Colonic mucosa (tissue), 4 donors: ENCODE measurements at regions of chr3 and their contacts with region 1.

Region 1: DNA sequence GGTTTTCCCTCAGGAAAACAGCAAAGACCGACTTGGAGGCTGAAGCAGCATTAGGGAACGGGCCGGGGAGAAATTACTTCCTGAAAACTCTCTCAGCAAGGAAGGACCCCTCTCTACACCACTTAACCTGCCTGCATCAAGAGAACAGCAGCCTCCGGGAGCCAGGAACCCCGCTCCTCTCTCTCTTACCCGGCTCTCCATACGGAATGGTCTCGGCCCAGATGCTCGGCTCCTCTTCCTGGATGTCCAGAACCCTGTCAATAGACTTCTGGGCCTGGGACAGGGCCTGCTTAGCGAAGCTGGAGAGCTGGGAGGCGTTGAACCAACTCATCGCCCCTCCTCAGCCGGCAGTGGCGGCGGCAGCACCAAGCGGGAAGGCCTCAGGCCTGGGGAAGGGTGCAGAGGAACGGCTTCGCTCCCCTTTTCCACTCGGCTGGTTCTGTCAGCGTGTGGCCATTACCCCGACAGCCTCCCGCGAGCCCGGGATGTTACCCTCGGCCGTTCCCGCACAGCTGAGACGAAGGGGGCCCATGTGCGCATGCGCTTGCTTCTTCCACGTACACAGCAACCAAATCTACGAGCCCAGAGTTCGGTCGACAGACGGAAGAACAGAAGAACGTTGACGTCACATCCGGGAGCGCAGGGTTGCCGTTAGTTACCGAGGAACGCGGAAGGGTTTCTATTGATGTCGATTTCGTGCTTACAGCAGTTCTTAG is at the start of gene TMF1:
- DNase-seq: peak; percentile 98
- H3K4me3 ChIP-seq: peak within 1 kb of the TSS; percentile 88
- H3K27ac ChIP-seq: peak within 1 kb of the TSS; percentile 98
- H3K4me1 ChIP-seq: peaks cover 10% of the 10 kb centered on the region
- H3K27me3 ChIP-seq: no peaks in the 10 kb centered on the region
- CTCF ChIP-seq: no peak
- total RNA-seq, gene TMF1: 39.0 to 60.2 TPM

Region 2: DNA sequence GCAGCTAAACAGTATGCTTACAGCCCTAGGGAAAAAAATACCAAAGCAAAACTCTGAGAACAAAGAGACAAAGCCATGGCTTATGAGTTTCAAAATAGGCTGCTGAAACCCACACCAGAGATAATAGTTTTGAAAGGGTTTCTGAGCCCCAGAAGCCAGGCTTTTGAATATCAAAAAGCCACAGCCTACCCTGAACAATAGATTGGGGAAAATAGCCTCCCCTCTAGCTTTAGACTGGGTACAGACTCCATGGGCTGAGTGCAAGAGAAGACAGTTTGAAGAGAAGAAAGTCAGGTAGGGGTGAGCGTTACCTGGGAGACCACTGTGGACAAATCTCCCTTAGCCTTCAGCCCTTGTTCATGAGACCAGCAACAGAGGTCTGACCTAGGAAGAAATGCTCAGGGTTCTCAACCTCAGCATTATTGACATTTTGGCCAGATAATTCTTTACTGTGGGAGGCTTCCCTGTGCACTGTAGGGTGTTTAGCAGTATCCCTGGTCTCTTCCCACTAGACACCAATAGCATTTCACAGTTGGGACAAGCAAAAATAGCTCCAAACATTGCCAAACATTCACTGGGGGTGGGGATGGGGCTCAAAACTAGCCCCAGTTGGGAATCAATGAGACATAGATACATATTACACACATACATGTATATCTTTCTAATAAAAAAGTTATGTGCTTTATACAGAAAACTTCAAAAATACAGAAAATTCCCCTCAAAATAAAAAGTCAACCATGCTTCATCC is 108.0 kb before region 1 on chr3:
- intact Hi-C with region 1: no loop called
- DNase-seq: no peak
- H3K4me3 ChIP-seq: no peak overlapping the region
- H3K27ac ChIP-seq: no peak overlapping the region
- H3K4me1 ChIP-seq: no peaks in the 10 kb centered on the region
- H3K27me3 ChIP-seq: no peaks in the 10 kb centered on the region
- CTCF ChIP-seq: no peak

Region 3: GRCh38 chr3:69013253-69014021 is 38.5 kb before region 1 on chr3 and contains the start of gene EOGT:
- intact Hi-C with region 1: loop called (anchors 5 kb)
- DNase-seq: peak; percentile 94
- H3K4me3 ChIP-seq: peak within 1 kb of the TSS; percentile 88
- H3K27ac ChIP-seq: peak within 1 kb of the TSS; percentile 93
- H3K4me1 ChIP-seq: no peaks in the 10 kb centered on the region
- H3K27me3 ChIP-seq: no peaks in the 10 kb centered on the region
- CTCF ChIP-seq: peak; percentile 56
- total RNA-seq, gene EOGT: 9.1 to 13.2 TPM